Posterior cingulate gyrus (tissue), 11 donors: ENCODE measurements at regions of chr10 and their contacts with region 1.

Region 1: DNA sequence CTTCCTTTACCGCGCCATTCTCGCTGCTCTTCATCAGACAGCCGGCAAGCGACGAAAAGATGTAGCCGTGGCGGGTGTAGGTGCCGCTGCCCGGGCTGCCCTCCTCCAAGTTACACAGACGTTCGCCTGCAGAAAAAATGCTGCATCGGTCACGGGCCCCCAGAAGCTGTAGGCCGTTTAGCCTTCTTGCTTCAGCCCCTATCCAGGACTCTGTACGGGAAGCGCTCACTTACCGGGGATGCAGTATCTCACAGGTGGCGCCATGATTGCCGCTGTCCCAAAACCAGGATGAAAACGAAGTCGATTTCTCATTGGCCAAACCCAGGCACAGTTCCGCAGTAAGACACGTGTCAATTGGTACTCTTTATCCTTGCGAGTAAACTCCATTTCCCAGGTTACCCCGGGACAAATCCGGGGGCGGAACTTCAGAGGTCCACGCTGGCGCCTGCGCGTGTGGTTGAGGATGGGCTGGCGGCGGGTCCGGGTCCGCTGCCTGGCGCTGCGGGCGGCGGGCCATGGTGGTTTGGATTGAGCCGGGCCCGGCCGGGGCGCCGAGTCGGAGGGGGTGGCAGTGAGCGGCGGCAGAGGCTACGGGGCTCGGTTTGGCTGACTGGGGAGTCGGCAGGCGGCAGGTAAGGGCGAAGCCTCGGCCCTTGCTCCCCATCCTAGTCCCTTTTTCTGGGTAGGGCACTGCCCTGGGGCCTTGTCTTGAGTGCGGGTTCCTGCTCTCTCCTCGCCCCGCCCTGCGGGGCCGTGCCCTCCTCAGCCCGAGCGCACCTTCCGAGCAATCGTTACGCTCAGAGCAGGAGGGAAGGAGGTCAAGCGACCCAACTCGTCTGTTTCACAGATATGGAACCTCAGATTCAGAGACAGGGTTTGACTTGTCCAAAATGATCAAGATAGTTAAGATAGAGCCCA is at the starts of genes EXOSC1 and ZDHHC16:
- DNase-seq: peak; percentile 87 to 99 (median 94)

Region 2: DNA sequence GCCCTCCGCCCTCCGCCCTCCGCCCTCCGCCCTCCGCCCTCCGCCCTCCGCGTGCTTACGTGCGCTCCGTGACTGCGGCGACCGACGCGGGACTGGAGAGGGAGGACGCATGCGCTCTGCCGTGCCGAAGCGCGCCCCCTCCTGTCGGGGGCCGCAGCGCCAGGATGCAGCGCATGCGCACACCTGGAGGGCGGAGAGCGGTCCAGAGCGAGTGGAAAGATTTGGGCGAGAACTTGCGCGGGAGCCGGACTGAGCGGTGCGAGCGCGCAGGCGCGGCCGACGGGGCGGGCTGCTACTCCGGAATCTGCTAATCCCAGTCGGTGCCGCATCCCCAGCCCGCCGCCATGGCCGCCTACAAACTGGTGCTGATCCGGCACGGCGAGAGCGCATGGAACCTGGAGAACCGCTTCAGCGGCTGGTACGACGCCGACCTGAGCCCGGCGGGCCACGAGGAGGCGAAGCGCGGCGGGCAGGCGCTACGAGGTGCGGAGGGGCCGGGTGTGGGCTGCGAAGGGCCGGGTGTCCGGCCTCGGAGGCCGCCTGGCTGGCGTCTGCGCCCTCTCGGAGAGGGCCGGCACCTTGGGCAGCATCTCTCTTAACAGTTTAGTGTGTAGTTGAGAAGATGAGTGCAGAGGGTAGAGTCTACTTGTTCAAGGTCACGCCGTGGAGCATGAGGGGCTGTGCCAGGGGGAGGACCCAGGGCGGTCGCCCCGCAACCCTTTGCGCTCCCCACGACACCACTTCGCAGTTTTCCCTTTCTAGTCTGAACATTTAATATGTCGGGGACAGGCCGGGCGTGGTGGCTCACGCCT is 19.8 kb before region 1 on chr10 and contains the start of gene PGAM1:
- intact Hi-C with region 1: loop called (anchors 2 kb)
- DNase-seq: peak; percentile 90 to 99 (median 94)

Region 3: GRCh38 chr10:97612386-97612785 is 166.4 kb after region 1 on chr10:
- intact Hi-C with region 1: no loop called
- DNase-seq: no peak